GM18951 (cell line): ENCODE measurements at regions of chr11 and their contacts with region 1.

Region 1: DNA sequence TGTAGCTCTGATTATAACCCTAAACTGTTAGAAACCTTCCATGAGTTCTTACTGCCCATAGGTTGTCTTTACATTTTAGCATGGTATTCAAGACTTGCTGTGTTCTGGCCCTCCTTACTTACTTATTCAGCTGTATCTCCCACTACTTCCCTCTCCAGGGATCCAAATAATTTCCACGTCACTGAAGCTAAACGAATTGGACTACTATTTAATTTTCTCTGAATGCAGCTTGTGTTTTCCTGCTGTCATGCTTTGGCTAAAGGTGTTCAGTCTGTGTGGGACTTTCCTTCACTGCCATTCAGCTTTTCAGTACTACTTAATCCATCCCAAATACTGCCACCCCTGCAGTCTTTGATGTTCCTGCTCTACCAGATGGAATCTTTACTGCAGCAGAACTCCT is 88.3 kb downstream of the UVRAG start:
- POLR2A ChIP-seq: no peak

Region 2: DNA sequence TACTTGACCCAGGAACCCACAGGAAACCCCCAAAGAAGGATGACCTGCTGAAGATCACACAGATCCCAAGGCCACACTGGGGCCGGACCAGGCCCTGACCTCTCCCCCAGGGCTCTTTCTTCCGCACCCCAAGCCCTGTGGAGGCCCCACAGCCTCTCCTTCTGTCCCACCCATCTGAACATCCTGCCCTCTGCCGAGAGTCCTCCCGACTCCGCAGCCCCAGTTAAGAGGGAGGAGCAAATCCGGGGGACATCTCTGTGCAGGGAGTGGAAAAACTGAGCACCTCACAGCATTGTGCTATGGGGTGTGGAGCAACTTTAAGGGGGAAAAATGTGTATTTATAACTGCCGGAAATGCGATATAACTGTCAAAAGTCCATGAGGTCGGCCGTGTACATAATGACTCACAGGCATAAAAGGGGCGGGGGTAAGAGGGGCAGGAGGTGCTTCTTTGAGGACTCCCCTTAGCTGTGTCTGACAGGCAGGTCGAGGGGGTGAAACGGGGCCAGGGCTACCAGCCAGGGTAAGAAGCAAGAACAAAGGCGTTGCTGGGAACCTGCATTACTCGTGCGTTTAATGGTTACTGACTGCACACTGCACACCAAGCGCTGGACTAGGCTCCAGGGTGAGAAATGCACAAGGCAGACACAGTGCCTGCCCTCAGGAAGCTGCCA is 245.8 kb after region 1 on chr11:
- in situ Hi-C with region 1: loop called (anchors 5 kb)
- POLR2A ChIP-seq: no peak

Region 3: DNA sequence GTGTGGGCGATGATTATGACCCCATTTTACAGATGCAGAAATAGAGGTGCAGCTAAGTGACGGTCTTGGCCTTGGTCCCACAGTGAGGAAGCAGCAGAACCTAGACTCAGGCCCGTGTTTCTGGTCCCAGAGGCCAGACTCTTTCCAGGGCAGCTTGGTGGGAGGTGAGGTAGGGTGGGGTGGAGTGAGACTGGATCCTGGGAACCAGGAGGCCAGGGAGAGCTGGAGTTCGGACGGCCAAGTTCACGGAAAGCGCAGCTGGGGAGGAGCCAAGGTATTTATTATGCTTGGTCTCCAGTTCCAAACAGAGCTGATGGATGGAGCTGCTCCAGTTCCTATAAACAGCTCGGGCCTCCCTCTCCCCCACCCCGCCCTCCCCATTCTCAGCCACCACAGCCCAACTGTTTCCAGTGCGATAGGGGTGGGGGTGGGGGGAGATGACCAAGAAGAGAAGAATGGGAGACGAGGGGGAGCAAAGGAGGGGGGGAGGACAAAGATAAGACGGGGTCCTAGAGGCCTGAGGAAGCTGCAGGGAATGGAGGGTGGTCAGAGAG is 751.1 kb after region 1 on chr11:
- in situ Hi-C with region 1: no loop called
- POLR2A ChIP-seq: no peak